ENCODE measurements at regions of chr7 and their contacts with region 1.

Region 1: GRCh38 chr7:25894902-25895791 is 256.9 kb upstream of the NFE2L3 start:
- DNase-seq: peak in 1 of 2 donors; percentile 84
- H3K4me3 ChIP-seq: peak overlapping the region in 1 of 2 donors; percentile 29
- H3K27ac ChIP-seq: no peak overlapping the region
- H3K4me1 ChIP-seq: no peaks in the 10 kb centered on the region
- H3K27me3 ChIP-seq: peaks cover 7% of the 10 kb centered on the region
- CTCF ChIP-seq: peak; percentile 13 to 64 (median 59)

Region 2: DNA sequence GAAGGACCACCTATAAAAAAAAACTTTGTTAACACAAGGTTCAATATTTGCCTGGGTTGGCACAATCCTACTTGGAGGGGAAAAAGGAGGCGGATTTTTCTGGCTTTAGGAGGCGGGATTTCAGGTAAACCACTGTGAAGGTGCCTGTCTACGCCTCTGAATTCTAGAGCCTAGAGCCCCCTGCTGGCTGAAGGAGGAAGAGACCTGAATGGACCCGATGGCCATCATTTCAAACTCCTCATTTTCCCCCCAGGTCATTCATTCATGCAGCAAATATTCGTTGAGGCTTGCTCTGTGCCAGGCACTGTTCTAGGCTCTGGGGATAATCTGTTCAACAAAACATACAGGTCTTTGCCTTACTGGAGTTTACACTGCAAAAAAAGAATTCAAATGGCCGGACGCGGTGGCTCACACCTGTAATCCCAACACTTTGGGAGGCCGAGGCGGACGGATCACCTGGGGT is 166.6 kb after region 1 on chr7:
- intact Hi-C with region 1: loop called (anchors 1 kb)
- DNase-seq: peak in 1 of 2 donors; percentile 74
- H3K4me3 ChIP-seq: no peak overlapping the region
- H3K27ac ChIP-seq: no peak overlapping the region
- H3K4me1 ChIP-seq: no peaks in the 10 kb centered on the region
- H3K27me3 ChIP-seq: no peaks in the 10 kb centered on the region
- CTCF ChIP-seq: peak; percentile 21 to 61 (median 54)

Region 3: GRCh38 chr7:26667500-26668133 is 772.5 kb after region 1 on chr7:
- intact Hi-C with region 1: loop called (anchors 10 kb)
- DNase-seq: no peak
- H3K4me3 ChIP-seq: no peak overlapping the region
- H3K27ac ChIP-seq: no peak overlapping the region
- H3K4me1 ChIP-seq: no peaks in the 10 kb centered on the region
- H3K27me3 ChIP-seq: no peaks in the 10 kb centered on the region
- CTCF ChIP-seq: peak; percentile 45 to 68 (median 52)

Region 4: DNA sequence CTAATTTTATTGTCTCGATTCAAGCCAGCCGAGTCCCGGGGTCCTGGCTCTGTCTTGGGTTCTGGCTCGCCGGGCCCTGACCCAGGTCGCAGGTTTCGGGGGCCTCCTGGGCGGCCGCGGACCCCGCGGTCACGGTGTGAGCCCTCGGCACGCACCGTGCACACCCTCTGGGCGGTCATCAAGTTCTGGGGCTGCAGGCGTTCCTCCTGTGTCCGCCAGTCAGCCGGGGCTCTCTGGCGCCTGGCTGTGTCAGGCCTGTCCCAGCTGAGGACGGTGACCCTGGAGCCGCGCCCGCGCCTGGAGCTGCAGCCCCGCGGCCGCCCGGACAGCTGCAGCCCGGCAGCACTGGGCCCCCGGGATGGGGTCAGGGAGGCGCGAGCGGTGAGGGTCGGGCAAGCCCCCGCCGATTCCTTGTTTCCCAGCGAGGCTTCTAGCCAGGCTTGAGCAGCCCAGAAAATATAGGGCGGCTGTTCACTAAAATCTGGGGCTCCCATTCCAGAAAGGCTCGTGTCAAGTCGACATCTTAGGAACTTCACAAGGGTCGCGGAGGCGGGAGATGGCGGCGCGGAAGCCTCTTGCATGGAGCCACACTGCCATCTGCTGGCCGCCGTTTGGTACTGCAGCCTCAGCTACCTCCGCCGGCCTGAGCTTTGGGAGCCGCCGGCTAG is 1265.5 kb after region 1 on chr7:
- intact Hi-C with region 1: loop called (anchors 10 kb)
- DNase-seq: peak in 1 of 2 donors; percentile 93
- H3K4me3 ChIP-seq: peak overlapping the region; percentile 47 to 72
- H3K27ac ChIP-seq: peak overlapping the region in 1 of 2 donors; percentile 51
- H3K4me1 ChIP-seq: no peaks in the 10 kb centered on the region
- H3K27me3 ChIP-seq: peaks cover 11% of the 10 kb centered on the region
- CTCF ChIP-seq: peak; percentile 97 to 100 (median 99)

Region 5: DNA sequence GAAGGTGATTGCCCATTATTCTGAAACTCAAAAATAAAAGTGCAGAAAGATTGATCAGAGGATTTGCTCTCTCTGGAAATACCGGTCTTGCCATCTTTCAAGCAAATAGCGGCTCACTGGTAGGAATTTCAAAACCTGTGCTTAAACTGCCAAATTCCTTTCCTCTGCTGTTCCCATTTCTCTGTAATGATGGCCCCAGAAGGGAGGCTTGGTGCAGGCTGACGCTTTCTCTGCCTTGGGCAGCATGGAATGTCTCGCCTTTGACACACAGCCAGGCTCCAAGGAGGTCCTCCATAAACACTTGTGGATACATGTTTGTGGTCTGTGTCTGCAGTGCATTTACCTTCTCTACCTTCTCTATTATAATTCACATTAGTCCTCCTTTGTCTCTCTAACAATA is 1620.8 kb after region 1 on chr7:
- intact Hi-C with region 1: no loop called
- DNase-seq: no peak
- H3K4me3 ChIP-seq: no peak overlapping the region
- H3K27ac ChIP-seq: no peak overlapping the region
- H3K4me1 ChIP-seq: no peaks in the 10 kb centered on the region
- H3K27me3 ChIP-seq: no peaks in the 10 kb centered on the region
- CTCF ChIP-seq: no peak

Measured in ascending aorta (tissue), 2 donors.